ENCODE measurements at regions of chr15 and their contacts with region 1.

Region 1: GRCh38 chr15:81336568-81336967 is 12.6 kb upstream of the STARD5 start:
- DNase-seq: peak; percentile 13 to 59 (median 31)
- H3K4me3 ChIP-seq: no peak overlapping the region
- H3K4me3 Mint-ChIP-seq: no peak overlapping the region
- H3K27ac ChIP-seq: no peak overlapping the region
- H3K27ac Mint-ChIP-seq: peak overlapping the region in 3 of 8 donors; percentile 13 to 66 (median 60)
- H3K4me1 ChIP-seq: peaks cover 2% of the 10 kb centered on the region
- H3K4me1 Mint-ChIP-seq: peaks cover 0 to 5% (median 5%) of the 10 kb centered on the region in 3 donors
- H3K27me3 ChIP-seq: no peaks in the 10 kb centered on the region
- H3K27me3 Mint-ChIP-seq: no peaks in the 10 kb centered on the region

Region 2: GRCh38 chr15:81323944-81324881 is 12.4 kb before region 1 on chr15 and contains the start of gene STARD5:
- CTCF ChIA-PET with region 1: interaction called, 13 read pairs
- POLR2A ChIA-PET with region 1: interaction called, 4 read pairs
- DNase-seq: peak; percentile 92 to 96 (median 94)
- H3K4me3 ChIP-seq: peak within 1 kb of the TSS; percentile 86
- H3K4me3 Mint-ChIP-seq: peak within 1 kb of the TSS; percentile 85 to 100 (median 95)
- H3K27ac ChIP-seq: peak within 1 kb of the TSS; percentile 62
- H3K27ac Mint-ChIP-seq: peak within 1 kb of the TSS; percentile 41 to 98 (median 92)
- H3K4me1 ChIP-seq: peaks cover 20% of the 10 kb centered on the region
- H3K4me1 Mint-ChIP-seq: peaks cover 23 to 42% (median 26%) of the 10 kb centered on the region in 3 donors
- H3K27me3 ChIP-seq: no peaks in the 10 kb centered on the region
- H3K27me3 Mint-ChIP-seq: no peaks in the 10 kb centered on the region
- total RNA-seq, gene STARD5: 4.4 to 5.8 TPM

Region 3: DNA sequence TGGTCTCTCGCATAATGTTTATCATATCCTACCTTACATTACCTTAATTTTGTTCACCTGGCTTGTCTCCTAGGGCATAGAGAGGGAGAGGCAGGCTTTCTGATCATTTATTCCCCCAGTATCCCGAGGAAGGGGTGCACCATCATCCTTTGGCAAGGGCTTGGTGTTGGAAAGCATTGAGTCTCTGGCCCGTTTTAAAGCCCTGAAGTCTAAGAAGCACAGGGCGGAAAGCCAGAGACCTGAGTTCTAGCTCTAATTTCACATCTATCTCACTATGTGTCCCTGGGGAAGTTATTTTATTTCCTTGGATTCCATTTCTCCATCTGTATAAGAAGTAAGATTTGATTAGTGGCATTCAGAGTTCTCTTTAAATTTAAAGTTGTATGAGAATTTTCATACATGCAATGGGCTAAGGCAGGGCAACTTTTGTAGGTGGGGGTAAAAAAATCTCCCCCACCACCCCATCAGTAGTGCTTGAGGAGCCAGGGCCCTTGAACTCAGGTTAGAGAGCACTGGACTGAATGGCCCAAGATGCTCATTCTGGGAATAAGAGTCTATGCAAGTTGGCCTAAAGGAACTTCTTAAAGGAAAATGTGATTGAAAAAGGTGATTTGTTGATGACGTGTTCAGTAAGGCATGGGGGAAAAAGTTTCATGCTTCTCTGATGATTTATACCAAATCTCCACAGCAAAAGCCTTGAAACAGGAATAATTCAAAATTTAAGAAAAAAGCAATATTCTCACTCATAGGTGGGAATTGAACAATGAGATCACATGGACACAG is 27.3 kb after region 1 on chr15:
- CTCF ChIA-PET with region 1: no interaction called
- POLR2A ChIA-PET with region 1: no interaction called
- DNase-seq: no peak
- H3K4me3 ChIP-seq: no peak overlapping the region
- H3K4me3 Mint-ChIP-seq: no peak overlapping the region
- H3K27ac ChIP-seq: no peak overlapping the region
- H3K27ac Mint-ChIP-seq: no peak overlapping the region
- H3K4me1 ChIP-seq: no peaks in the 10 kb centered on the region
- H3K4me1 Mint-ChIP-seq: no peaks in the 10 kb centered on the region
- H3K27me3 ChIP-seq: no peaks in the 10 kb centered on the region
- H3K27me3 Mint-ChIP-seq: peaks cover 3% of the 10 kb centered on the region in 2 donors

Region 4: GRCh38 chr15:81375461-81375860 is 38.9 kb after region 1 on chr15:
- CTCF ChIA-PET with region 1: no interaction called
- POLR2A ChIA-PET with region 1: no interaction called
- DNase-seq: no peak
- H3K4me3 ChIP-seq: no peak overlapping the region
- H3K4me3 Mint-ChIP-seq: no peak overlapping the region
- H3K27ac ChIP-seq: no peak overlapping the region
- H3K27ac Mint-ChIP-seq: no peak overlapping the region
- H3K4me1 ChIP-seq: no peaks in the 10 kb centered on the region
- H3K4me1 Mint-ChIP-seq: peaks cover 0 to under 1% (median 0%) of the 10 kb centered on the region in 3 donors
- H3K27me3 ChIP-seq: no peaks in the 10 kb centered on the region
- H3K27me3 Mint-ChIP-seq: peaks cover 4 to 5% of the 10 kb centered on the region in 2 donors